Sigmoid colon (tissue), 7 donors: ENCODE measurements at regions of chr19 and their contacts with region 1.

Region 1: DNA sequence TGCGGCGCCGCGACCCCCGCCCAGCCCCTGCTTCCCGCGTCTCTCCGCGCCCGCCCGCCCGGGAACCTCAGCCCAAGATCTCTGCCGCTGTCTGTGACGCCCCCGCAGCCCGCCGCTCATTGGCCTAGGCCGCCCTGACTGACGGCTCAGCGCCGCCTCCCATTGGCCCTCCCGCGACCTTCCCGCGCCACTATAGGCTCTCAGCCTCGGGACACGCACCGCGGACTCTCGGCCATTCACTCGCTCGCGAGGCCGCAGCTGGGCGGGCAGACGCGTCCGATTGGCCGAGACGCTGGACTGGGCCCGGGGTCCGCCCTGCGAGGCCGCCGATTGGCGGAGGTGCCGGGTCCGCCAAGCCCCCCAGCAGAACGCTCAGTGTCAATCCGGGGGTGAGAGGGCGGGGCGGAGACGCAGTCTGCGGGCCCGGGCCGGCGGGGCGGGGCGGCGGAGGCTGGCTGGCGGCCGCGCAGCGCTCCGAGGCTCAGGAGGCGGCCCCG is at the start of gene PRKACA:
- DNase-seq: peak; percentile 100
- H3K4me3 ChIP-seq: peak within 1 kb of the TSS; percentile 72 to 99 (median 98)
- H3K27ac ChIP-seq: peak within 1 kb of the TSS; percentile 97 to 100 (median 100)
- H3K4me1 ChIP-seq: peaks cover 0 to 62% (median 59%) of the 10 kb centered on the region in 4 donors
- H3K27me3 ChIP-seq: no peaks in the 10 kb centered on the region
- CTCF ChIP-seq: no peak
- EP300 ChIP-seq: no peak
- POLR2A ChIP-seq: peak in 1 of 2 donors; percentile 17
- total RNA-seq, gene PRKACA: 33.6 to 36.6 (median 35.2) TPM

Region 2: GRCh38 chr19:14080887-14081324 is 36.8 kb before region 1 on chr19:
- intact Hi-C with region 1: no loop called
- DNase-seq: no peak
- H3K4me3 ChIP-seq: peak overlapping the region; percentile 64 to 88 (median 76)
- H3K27ac ChIP-seq: peak overlapping the region; percentile 86 to 95 (median 90)
- H3K4me1 ChIP-seq: peaks cover 0 to 22% (median 19%) of the 10 kb centered on the region in 4 donors
- H3K27me3 ChIP-seq: no peaks in the 10 kb centered on the region
- CTCF ChIP-seq: no peak
- EP300 ChIP-seq: no peak
- POLR2A ChIP-seq: no peak

Region 3: GRCh38 chr19:14091081-14091812 is 26.5 kb before region 1 on chr19:
- intact Hi-C with region 1: loop called (anchors 1 kb)
- DNase-seq: no peak
- H3K4me3 ChIP-seq: peak overlapping the region; percentile 60 to 84 (median 72)
- H3K27ac ChIP-seq: peak overlapping the region; percentile 91 to 98 (median 96)
- H3K4me1 ChIP-seq: peaks cover 0 to 20% (median 17%) of the 10 kb centered on the region in 4 donors
- H3K27me3 ChIP-seq: no peaks in the 10 kb centered on the region
- CTCF ChIP-seq: peak in 1 of 4 experiments; percentile 15
- EP300 ChIP-seq: no peak
- POLR2A ChIP-seq: no peak

Region 4: GRCh38 chr19:14136509-14137281 is 19.0 kb after region 1 on chr19 and contains the start of gene ASF1B:
- intact Hi-C with region 1: loop called (anchors 2 kb)
- DNase-seq: peak; percentile 100
- H3K4me3 ChIP-seq: peak within 1 kb of the TSS; percentile 65 to 88 (median 76)
- H3K27ac ChIP-seq: peak within 1 kb of the TSS; percentile 95 to 98 (median 96)
- H3K4me1 ChIP-seq: peaks cover 0 to 28% (median 27%) of the 10 kb centered on the region in 4 donors
- H3K27me3 ChIP-seq: no peaks in the 10 kb centered on the region
- CTCF ChIP-seq: peak; percentile 66 to 92 (median 76)
- EP300 ChIP-seq: no peak
- POLR2A ChIP-seq: peak; percentile 14 to 72
- total RNA-seq, gene ASF1B: 1.1 to 2.0 (median 1.4) TPM in 3 of 4 donors, not detected in the other